ENCODE measurements at regions of chr15 and their contacts with region 1.

Region 1: GRCh38 chr15:91852741-91853510 is 582 bp upstream of the SLCO3A1 start:
- DNase-seq: peak; percentile 64 to 79 (median 78)
- H3K4me3 ChIP-seq: peak overlapping the region; percentile 61
- H3K4me3 Mint-ChIP-seq: peak overlapping the region; percentile 85 to 98 (median 90)
- H3K27ac ChIP-seq: peak overlapping the region; percentile 41
- H3K27ac Mint-ChIP-seq: peak overlapping the region; percentile 91 to 95 (median 94)
- H3K4me1 ChIP-seq: peaks cover 62% of the 10 kb centered on the region
- H3K4me1 Mint-ChIP-seq: peaks cover 52 to 70% (median 65%) of the 10 kb centered on the region in 3 donors
- H3K27me3 ChIP-seq: no peaks in the 10 kb centered on the region
- H3K27me3 Mint-ChIP-seq: no peaks in the 10 kb centered on the region

Region 2: DNA sequence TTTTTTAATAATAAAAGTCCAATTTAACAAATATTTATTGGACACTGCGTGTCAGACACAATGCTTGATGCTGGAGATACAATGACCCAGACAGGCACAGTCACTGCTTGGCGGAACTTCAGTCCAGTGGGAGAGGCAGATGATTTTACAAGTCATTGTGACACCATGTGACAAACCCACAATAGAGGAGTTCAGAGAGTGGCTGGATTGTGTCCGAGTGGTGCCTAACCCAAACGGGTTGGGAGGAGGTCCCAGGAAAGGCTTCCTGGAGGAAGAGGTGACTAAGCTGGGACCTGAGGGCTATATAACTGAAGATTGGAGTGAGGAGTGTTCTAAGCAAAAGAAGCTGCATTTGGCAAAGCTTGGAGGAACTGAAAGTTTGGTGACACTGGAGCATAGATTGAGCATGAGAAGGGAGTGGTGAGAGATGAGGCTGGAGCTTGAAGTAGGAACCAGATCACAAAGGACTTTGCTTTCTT is 1281.8 kb before region 1 on chr15:
- CTCF ChIA-PET with region 1: no interaction called
- POLR2A ChIA-PET with region 1: no interaction called
- DNase-seq: no peak
- H3K4me3 ChIP-seq: no peak overlapping the region
- H3K4me3 Mint-ChIP-seq: peak overlapping the region in 2 of 7 donors; percentile 26 to 55
- H3K27ac ChIP-seq: peak overlapping the region; percentile 26
- H3K27ac Mint-ChIP-seq: peak overlapping the region in 5 of 8 donors; percentile 5 to 47 (median 30)
- H3K4me1 ChIP-seq: peaks cover 83% of the 10 kb centered on the region
- H3K4me1 Mint-ChIP-seq: peaks cover 69 to 94% (median 83%) of the 10 kb centered on the region in 3 donors
- H3K27me3 ChIP-seq: no peaks in the 10 kb centered on the region
- H3K27me3 Mint-ChIP-seq: no peaks in the 10 kb centered on the region

Region 3: DNA sequence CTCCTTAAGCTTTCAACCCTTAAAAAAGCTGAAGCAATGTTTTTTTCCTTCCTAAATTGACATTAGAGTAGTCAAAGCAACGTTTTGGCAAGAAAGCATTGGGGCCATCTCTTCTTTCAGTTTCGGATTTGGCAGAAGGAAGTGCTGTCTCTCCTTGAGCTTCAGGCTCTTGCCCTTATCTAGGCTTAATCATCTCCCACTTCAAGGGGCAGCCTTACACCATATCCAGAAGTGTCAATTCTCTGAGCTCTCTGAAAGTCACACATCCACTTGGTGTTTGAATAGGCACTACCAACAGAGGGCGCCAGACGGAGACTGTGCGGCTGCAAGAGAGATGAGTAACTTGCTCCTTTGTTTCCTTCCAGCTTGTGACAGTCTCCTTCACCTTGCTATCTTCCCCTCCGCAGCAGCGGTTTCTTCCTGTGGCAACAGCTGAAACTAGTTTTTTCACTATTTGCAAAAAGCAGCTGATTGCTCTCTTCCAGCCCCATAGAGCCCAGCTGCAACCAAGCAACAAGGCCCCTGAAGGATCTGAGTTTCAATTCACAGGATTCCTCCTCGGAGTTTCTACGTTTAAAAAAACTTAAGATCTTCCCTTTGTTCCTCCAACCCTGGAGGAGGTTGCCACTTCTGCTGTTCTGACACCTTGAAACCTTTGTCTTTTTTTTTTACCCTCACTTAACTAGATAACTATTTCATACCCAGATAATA is 146.4 kb before region 1 on chr15:
- CTCF ChIA-PET with region 1: interaction called, 21 read pairs
- POLR2A ChIA-PET with region 1: interaction called, 3 read pairs
- DNase-seq: peak; percentile 59 to 86 (median 71)
- H3K4me3 ChIP-seq: no peak overlapping the region
- H3K4me3 Mint-ChIP-seq: peak overlapping the region; percentile 1 to 88 (median 64)
- H3K27ac ChIP-seq: no peak overlapping the region
- H3K27ac Mint-ChIP-seq: peak overlapping the region; percentile 66 to 92 (median 84)
- H3K4me1 ChIP-seq: peaks cover 14% of the 10 kb centered on the region
- H3K4me1 Mint-ChIP-seq: peaks cover 17 to 24% (median 18%) of the 10 kb centered on the region in 3 donors
- H3K27me3 ChIP-seq: no peaks in the 10 kb centered on the region
- H3K27me3 Mint-ChIP-seq: peaks cover 4 to 6% of the 10 kb centered on the region in 2 donors

Region 4: DNA sequence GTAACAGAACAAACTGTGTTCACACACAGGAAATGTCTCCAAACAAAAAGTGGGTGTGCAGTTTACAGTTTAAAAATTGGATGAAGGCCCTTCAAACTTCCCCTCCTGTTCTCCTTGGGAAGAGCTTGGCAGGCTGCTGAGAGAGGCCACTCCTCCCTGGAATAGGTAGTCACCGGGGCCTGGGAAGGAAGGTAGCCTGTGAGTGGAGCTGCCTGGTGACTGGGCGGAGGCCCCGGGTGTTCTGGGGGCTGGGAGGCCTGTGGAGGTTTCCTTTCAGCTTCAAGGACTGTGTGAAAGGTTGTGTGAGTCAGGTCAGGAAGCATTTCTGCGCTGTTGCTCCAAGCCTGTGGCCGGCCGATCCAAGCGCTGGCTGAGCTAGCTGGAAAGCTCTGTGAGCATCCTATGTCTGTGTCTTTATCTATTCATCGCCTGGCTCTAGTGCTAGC is 14.7 kb after region 1 on chr15:
- CTCF ChIA-PET with region 1: interaction called, 22 read pairs
- POLR2A ChIA-PET with region 1: interaction called, 4 read pairs
- DNase-seq: no peak
- H3K4me3 ChIP-seq: no peak overlapping the region
- H3K4me3 Mint-ChIP-seq: peak overlapping the region in 1 of 7 donors; percentile 19
- H3K27ac ChIP-seq: no peak overlapping the region
- H3K27ac Mint-ChIP-seq: no peak overlapping the region
- H3K4me1 ChIP-seq: peaks cover 74% of the 10 kb centered on the region
- H3K4me1 Mint-ChIP-seq: peaks cover 73 to 87% (median 86%) of the 10 kb centered on the region in 3 donors
- H3K27me3 ChIP-seq: no peaks in the 10 kb centered on the region
- H3K27me3 Mint-ChIP-seq: no peaks in the 10 kb centered on the region

Region 5: DNA sequence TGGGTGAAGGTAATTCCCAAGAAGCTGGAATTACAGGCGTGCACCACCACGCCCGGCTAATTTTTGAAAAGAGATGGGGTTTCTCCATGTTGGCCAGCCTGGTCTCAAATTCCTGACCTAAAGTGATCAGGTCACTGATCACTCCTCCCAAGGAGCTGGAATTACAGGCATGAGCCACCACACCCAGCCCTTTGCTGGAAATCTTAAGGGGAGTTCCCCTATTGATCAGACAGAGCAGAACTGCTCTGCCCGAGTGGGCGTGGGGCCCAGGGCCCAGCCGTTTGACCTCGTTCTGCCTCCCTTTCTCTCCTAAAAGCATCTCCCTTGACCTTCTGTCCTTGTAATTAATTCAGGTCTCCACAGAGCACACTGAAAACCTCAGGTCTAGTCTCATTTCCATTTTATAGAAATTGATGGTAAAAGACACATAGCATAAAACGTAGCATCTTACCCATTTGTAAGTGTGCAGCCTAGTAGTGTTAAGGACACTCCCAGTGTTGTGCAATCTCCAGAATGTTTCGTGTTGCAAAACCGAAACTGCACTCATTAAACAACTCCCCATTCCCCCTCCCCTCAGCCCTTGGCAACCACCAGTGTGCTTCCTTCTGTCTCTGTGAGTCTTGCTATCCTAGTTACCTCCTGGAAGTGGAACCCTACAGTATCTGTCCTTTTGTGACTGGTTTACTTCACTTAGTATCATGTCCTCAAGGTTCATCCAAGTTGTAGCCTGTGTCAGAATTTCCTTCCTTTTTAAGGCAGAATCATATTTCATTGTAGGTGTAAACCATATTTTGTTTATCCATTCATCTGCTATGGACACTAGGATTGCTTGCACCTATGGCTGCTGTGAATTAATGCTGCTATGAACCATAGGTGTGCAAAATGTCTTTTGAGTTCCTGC is 90.0 kb after region 1 on chr15:
- CTCF ChIA-PET with region 1: interaction called, 16 read pairs
- POLR2A ChIA-PET with region 1: interaction called, 4 read pairs
- DNase-seq: peak in 4 of 5 donors; percentile 9 to 54 (median 31)
- H3K4me3 ChIP-seq: no peak overlapping the region
- H3K4me3 Mint-ChIP-seq: peak overlapping the region in 6 of 7 donors; percentile 66 to 79 (median 70)
- H3K27ac ChIP-seq: no peak overlapping the region
- H3K27ac Mint-ChIP-seq: peak overlapping the region; percentile 58 to 96 (median 82)
- H3K4me1 ChIP-seq: peaks cover 14% of the 10 kb centered on the region
- H3K4me1 Mint-ChIP-seq: peaks cover 66 to 96% (median 82%) of the 10 kb centered on the region in 3 donors
- H3K27me3 ChIP-seq: no peaks in the 10 kb centered on the region
- H3K27me3 Mint-ChIP-seq: no peaks in the 10 kb centered on the region

Region 6: GRCh38 chr15:92077353-92078085 is 224.6 kb after region 1 on chr15:
- CTCF ChIA-PET with region 1: interaction called, 20 read pairs
- POLR2A ChIA-PET with region 1: no interaction called
- DNase-seq: peak; percentile 21 to 67 (median 28)
- H3K4me3 ChIP-seq: no peak overlapping the region
- H3K4me3 Mint-ChIP-seq: no peak overlapping the region
- H3K27ac ChIP-seq: no peak overlapping the region
- H3K27ac Mint-ChIP-seq: peak overlapping the region in 2 of 8 donors; percentile 29 to 33
- H3K4me1 ChIP-seq: peaks cover 13% of the 10 kb centered on the region
- H3K4me1 Mint-ChIP-seq: peaks cover 32 to 49% (median 40%) of the 10 kb centered on the region in 3 donors
- H3K27me3 ChIP-seq: no peaks in the 10 kb centered on the region
- H3K27me3 Mint-ChIP-seq: no peaks in the 10 kb centered on the region

Measured in CD8-positive, alpha-beta memory T cell (primary cell).